Calu3 (cell line): ENCODE measurements at regions of chr10 and their contacts with region 1.

Region 1: DNA sequence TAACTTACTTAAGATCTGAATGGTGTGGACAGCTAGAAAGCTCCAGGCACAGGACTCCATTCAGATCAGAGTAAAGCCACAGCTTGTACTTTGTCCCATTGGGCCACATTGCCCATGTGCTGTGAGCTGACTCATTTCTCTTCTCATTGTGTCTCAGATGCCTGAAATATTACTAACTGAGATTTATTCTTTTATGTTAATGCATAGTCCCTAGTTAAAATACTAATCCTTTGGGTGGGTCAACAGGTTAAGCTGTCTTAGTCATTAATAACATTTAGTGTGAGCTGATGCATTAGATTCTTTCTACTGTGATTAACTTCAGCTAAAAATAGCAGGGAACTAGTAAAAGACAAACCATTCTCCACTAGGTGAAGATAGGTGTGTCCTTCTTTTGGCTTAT is 104.7 kb upstream of the ARMC3 start:
- DNase-seq: peak; percentile 64
- H3K4me3 Mint-ChIP-seq: no peak overlapping the region
- H3K27ac Mint-ChIP-seq: peak overlapping the region; percentile 63
- H3K4me1 Mint-ChIP-seq: peaks cover 10% of the 10 kb centered on the region
- H3K27me3 Mint-ChIP-seq: no peaks in the 10 kb centered on the region
- CTCF ChIP-seq: no peak

Region 2: DNA sequence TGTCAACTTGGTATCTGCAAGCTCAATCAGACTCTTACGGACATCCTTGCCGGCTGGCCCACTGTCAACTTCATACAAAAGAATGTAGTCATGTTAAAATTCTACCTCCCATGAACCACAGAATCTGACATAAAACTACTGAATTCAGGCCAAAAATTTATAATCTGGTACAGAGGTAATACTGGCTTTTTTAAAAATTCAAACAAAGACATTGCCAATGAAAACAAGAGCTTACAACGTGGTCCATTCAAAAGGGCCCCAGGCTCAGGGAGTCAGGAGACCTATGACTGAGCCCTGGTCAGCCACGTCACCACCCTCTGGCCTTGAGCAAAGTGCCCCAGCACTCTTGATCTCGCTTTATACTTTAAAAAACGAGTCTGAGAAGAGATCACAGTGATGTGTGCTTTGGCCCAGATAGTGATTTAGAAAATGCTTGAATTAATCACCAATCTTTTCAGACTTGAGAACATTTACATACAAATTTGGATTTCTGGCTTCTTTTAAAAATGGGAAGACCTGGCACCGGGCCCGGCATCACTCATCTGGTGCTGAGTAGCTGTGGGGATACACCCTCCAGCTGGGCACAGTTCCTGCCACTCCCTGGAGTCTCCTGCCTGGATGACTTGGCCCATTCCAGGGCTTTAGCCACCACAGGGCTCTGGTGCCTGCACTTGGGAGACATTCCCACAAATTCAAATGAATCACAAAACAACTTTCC is 202.8 kb before region 1 on chr10:
- CTCF ChIA-PET with region 1: interaction called, 5 read pairs
- intact Hi-C with region 1: loop called (anchors 10 kb)
- DNase-seq: peak; percentile 60
- H3K4me3 Mint-ChIP-seq: no peak overlapping the region
- H3K27ac Mint-ChIP-seq: peak overlapping the region; percentile 29
- H3K4me1 Mint-ChIP-seq: peaks cover 50% of the 10 kb centered on the region
- H3K27me3 Mint-ChIP-seq: no peaks in the 10 kb centered on the region
- CTCF ChIP-seq: no peak